Right cardiac atrium (tissue), 5 donors: ENCODE measurements at regions of chr19 and their contacts with region 1.

Region 1: GRCh38 chr19:13277104-13277809 is 127.0 kb downstream of the IER2 start:
- DNase-seq: peak; percentile 37 to 79 (median 69)
- ATAC-seq: peak; percentile 87 to 93
- H3K4me3 ChIP-seq: no peak overlapping the region
- H3K27ac ChIP-seq: no peak overlapping the region
- H3K4me1 ChIP-seq: no peaks in the 10 kb centered on the region
- H3K27me3 ChIP-seq: no peaks in the 10 kb centered on the region

Region 2: DNA sequence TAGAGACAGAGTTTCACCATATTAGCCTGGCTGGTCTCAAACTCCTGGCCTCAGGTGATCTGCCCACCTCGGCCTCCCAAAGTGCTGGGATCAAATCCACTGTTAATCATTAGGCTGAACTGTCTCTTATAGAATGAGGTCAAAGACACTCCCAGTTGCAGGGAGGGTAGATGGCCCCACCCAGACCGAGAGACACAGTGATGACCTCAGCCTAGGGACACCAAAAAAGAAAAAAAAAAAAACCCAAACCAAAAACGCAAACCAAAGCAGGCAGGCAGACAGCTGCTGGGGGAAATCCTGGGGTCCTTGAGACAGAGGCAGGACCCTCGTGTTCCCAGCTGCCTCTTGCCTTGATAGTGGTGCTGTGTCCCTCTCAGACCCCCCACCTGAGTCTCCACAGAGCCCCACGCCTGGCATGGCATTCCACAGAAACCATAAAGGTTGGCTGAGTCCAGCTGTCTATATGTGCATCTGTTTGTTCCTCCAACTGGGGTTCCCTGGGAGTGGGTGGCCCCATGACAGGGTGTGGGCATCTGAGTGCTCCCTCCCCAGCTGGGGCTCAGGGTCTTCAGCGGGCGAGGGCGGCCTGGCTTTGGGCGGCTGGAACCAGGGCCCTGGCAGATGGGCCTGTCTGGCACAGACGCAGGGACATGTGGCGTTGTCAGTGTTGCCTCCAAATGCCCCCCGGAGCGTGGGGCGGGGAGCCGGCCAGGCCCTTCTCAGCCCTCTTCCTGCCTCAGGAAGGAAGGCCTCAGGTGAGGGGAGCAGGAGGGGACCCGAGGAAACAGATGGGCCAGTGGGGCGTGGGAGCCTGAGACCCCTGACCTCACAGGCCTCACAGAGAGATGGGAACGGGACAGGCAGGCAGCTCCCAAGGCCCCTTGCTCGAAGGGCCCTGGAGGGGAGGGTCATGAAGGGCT is 302.7 kb before region 1 on chr19:
- intact Hi-C with region 1: loop called in 1 of 4 experiments (anchors 10 kb)
- DNase-seq: peak in 2 of 3 donors; percentile 34 to 57
- ATAC-seq: no peak
- H3K4me3 ChIP-seq: no peak overlapping the region
- H3K27ac ChIP-seq: no peak overlapping the region
- H3K4me1 ChIP-seq: no peaks in the 10 kb centered on the region
- H3K27me3 ChIP-seq: no peaks in the 10 kb centered on the region

Region 3: DNA sequence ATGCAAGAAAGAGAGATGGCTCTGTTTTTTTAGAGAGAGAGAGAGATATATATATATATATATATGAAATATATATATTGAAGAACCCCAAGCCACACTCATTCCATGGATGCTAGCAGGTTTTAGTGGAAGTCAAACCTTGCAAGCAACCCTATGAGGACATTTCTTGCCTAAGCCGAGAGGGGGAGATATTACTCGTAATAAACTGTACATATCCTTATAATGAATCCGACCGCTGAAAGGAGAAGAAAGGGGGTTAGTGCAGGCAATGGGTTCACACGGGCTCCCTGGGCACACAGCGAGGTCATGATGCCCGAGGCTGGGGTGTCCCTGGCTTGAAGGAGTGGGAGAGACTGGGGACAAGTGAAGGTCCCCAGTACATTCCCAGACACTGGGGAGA is 48.7 kb before region 1 on chr19:
- intact Hi-C with region 1: no loop called
- DNase-seq: no peak
- ATAC-seq: no peak
- H3K4me3 ChIP-seq: no peak overlapping the region
- H3K27ac ChIP-seq: no peak overlapping the region
- H3K4me1 ChIP-seq: no peaks in the 10 kb centered on the region
- H3K27me3 ChIP-seq: no peaks in the 10 kb centered on the region

Region 4: DNA sequence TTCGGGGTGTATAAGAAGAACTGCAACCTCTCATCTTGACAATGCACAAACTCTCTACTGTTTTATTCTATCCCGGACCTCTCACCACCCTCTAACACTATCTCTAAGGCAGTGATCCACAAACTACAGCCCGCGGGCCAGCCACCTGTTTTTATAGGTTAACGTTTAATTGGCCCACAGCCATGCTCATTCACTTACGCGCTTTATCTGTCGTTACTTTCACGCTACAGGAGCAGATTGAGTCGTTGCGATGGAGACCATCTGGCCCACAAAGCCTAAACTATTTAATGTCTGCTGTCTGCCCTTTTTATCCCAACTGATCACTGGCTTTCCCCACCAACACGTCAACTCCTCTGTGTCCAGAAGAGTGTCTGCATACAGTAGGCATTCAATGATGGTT is 70.1 kb after region 1 on chr19:
- intact Hi-C with region 1: no loop called
- DNase-seq: no peak
- ATAC-seq: no peak
- H3K4me3 ChIP-seq: no peak overlapping the region
- H3K27ac ChIP-seq: no peak overlapping the region
- H3K4me1 ChIP-seq: no peaks in the 10 kb centered on the region
- H3K27me3 ChIP-seq: no peaks in the 10 kb centered on the region

Region 5: GRCh38 chr19:13430790-13431582 is 153.7 kb after region 1 on chr19:
- intact Hi-C with region 1: loop called in 1 of 4 experiments (anchors 5 kb)
- DNase-seq: peak; percentile 23 to 66 (median 61)
- ATAC-seq: peak in 1 of 2 donors; percentile 38
- H3K4me3 ChIP-seq: no peak overlapping the region
- H3K27ac ChIP-seq: no peak overlapping the region
- H3K4me1 ChIP-seq: no peaks in the 10 kb centered on the region
- H3K27me3 ChIP-seq: no peaks in the 10 kb centered on the region

Region 6: DNA sequence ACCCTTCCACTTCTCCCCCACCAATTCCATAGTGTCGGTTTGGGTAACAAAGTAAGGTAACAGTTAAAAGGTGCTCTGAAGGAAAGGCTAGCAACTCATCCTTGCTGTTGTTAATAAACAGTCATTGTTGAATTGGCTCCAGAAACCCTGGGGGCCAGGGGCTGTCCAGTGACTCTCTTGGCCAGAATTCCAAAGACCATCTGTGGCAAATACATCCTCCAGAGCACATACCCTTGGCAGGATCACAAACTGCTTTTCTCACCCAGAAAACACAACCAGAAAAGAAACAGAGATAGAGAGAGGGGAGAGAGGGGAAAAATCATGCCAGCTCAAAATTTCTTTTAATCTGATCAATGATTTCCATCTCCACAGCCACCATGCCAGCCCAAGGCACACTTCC is 206.9 kb after region 1 on chr19:
- intact Hi-C with region 1: no loop called
- DNase-seq: no peak
- ATAC-seq: no peak
- H3K4me3 ChIP-seq: no peak overlapping the region
- H3K27ac ChIP-seq: no peak overlapping the region
- H3K4me1 ChIP-seq: no peaks in the 10 kb centered on the region
- H3K27me3 ChIP-seq: no peaks in the 10 kb centered on the region

Region 7: DNA sequence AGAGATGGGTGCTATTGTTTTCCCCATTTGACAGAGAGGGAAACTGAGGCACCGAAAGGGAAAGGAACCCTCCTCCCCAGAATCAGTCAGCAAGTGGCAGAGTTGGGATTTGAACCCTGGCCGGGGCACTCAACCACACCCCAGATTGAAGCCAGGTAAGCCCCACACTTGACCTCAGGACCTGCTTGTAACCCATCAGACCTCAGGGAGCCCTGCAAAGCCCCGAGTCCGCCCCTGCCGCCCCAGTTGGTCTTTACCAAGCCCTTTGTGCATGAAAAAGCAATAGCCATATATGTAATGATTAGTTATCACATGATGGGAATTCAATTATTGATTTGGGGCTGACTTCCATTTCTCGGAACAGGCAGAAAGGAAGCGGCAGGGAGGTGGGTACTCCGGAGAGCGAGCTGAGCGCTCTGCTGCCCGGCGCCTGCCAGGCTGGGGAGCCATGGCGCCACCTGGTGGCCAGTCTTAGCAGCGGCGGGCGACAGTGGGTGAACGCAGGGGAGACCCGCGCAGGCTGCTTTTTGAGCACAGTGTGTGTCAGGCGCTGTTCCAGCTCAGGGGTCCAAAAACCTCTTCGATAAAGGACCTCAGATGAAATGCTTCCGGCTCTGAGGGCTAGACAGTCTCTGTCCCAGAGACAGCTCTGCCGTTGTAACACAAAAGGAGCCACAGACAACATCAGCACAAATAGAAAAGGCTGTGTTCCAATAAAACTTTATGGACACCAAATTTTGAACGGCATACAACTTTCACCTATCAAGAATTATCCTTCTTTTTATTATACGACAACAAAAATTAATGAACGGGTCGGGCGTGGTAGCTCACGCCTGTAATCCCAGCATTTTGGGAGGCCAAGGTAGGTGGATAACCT is 311.9 kb after region 1 on chr19:
- intact Hi-C with region 1: loop called (anchors 2 to 5 kb)
- DNase-seq: peak; percentile 68 to 88 (median 87)
- ATAC-seq: peak; percentile 81 to 84
- H3K4me3 ChIP-seq: no peak overlapping the region
- H3K27ac ChIP-seq: no peak overlapping the region
- H3K4me1 ChIP-seq: no peaks in the 10 kb centered on the region
- H3K27me3 ChIP-seq: no peaks in the 10 kb centered on the region

Region 8: GRCh38 chr19:13718733-13719132 is 441.5 kb after region 1 on chr19:
- intact Hi-C with region 1: loop called in 2 of 4 experiments (anchors 5 to 10 kb)
- DNase-seq: peak; percentile 30 to 66 (median 65)
- ATAC-seq: peak; percentile 54 to 81
- H3K4me3 ChIP-seq: no peak overlapping the region
- H3K27ac ChIP-seq: no peak overlapping the region
- H3K4me1 ChIP-seq: no peaks in the 10 kb centered on the region
- H3K27me3 ChIP-seq: no peaks in the 10 kb centered on the region

Region 9: GRCh38 chr19:13727798-13728197 is 450.5 kb after region 1 on chr19:
- intact Hi-C with region 1: loop called in 2 of 4 experiments (anchors 5 to 10 kb)
- DNase-seq: no peak
- ATAC-seq: no peak
- H3K4me3 ChIP-seq: no peak overlapping the region
- H3K27ac ChIP-seq: no peak overlapping the region
- H3K4me1 ChIP-seq: no peaks in the 10 kb centered on the region
- H3K27me3 ChIP-seq: no peaks in the 10 kb centered on the region